AG04449 (cell line): ENCODE measurements at regions of chr2 and their contacts with region 1.

Region 1: DNA sequence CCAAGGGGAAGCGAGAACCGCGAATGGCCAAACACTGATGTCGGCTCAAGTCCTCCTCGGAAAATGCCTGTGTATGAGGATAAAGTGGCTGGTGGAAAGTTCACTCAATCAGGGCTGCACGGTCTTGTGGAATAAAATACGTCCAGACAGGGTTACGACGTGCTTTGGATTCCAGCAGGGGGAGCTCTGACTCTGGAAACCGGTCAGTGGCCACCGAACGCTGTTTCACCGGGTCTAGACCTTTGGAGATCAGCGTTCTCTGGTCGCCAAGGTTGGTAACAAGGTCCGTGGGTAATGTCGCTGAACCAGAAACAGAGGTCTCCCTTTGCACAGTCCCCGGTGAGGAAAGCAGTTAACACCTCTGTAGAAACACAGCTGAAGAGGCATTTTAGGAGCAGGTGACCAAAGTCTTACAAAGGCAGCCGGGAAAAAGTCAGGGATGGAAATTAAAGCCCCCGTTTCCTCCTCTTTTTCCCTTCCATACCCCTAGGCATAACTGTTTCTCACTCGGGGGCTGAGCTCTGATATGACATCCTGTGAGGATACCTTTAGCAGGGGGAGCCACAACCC is 47.8 kb downstream of the CDCA7 start:
- DNase-seq: peak; percentile 23
- H3K4me3 ChIP-seq: peak overlapping the region; percentile 47
- CTCF ChIP-seq: peak; percentile 78

Region 2: DNA sequence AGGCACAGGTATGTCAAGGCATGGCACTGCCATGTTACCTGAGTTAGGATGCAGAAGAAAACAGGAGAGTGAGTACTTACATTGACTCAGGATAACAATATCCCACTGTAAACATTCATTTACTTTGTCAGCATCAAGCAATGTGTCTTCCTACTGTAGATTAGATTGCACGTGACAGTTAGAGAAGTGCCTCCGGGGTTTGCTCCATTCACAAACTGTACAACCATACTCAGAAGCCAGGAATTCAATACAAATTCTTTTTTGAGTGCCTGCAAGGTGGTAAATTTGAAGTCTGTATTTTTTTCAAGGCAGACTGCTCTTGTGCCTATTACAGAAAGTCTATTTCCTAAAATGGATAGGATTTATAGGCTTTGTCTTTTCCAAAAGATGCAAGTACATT is 13.7 kb before region 1 on chr2:
- CTCF ChIA-PET with region 1: interaction called, 22 read pairs
- POLR2A ChIA-PET with region 1: no interaction called
- DNase-seq: no peak
- H3K4me3 ChIP-seq: no peak overlapping the region
- CTCF ChIP-seq: no peak

Region 3: DNA sequence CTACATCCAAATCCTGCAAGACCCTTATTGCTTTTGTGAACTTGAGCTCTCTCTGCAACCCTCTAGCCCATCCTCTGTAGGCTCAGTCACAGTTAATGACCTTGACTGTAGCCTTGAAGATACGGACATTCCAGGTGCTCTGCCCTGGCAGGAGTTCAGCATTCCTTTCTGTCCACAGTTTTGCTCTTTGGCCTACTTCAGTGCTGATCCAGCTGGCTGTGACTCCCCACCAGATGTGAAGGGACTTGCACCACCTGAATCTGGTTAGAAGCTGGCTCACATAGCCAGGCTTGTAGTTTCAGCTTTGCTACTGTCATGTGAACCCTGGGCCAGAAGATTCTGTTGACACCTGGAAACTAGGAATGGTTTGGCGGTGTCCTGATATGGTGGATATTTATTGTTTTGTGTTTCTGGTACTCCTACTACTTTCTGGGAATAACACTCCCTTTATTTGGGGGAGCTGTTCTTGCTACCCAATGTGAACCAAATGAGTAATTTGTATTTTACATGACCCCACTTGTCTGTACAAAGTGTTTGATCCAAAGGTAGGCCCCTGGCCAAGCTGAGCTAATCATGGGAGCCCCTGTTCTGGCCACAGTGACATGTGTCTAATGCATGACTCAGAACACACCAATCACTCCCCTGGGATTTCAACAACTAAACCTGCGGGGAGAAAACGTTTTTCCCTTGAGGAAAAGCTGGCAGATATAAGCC is 25.6 kb after region 1 on chr2:
- CTCF ChIA-PET with region 1: interaction called, 14 read pairs
- POLR2A ChIA-PET with region 1: no interaction called
- DNase-seq: no peak
- H3K4me3 ChIP-seq: no peak overlapping the region
- CTCF ChIP-seq: no peak

Region 4: GRCh38 chr2:173568054-173568453 is 165.6 kb after region 1 on chr2:
- CTCF ChIA-PET with region 1: interaction called, 39 read pairs
- POLR2A ChIA-PET with region 1: no interaction called
- DNase-seq: no peak
- H3K4me3 ChIP-seq: no peak overlapping the region
- CTCF ChIP-seq: peak; percentile 31

Region 5: GRCh38 chr2:173749315-173749714 is 346.8 kb after region 1 on chr2:
- CTCF ChIA-PET with region 1: interaction called, 22 read pairs
- POLR2A ChIA-PET with region 1: no interaction called
- DNase-seq: no peak
- H3K4me3 ChIP-seq: no peak overlapping the region
- CTCF ChIP-seq: peak; percentile 30

Region 6: GRCh38 chr2:174350018-174350417 is 947.5 kb after region 1 on chr2:
- CTCF ChIA-PET with region 1: interaction called, 18 read pairs
- POLR2A ChIA-PET with region 1: no interaction called
- DNase-seq: no peak
- H3K4me3 ChIP-seq: no peak overlapping the region
- CTCF ChIP-seq: peak; percentile 42